Cardiac septum (tissue), 1 donor: ENCODE measurements at regions of chr2 and their contacts with region 1.

Region 1: DNA sequence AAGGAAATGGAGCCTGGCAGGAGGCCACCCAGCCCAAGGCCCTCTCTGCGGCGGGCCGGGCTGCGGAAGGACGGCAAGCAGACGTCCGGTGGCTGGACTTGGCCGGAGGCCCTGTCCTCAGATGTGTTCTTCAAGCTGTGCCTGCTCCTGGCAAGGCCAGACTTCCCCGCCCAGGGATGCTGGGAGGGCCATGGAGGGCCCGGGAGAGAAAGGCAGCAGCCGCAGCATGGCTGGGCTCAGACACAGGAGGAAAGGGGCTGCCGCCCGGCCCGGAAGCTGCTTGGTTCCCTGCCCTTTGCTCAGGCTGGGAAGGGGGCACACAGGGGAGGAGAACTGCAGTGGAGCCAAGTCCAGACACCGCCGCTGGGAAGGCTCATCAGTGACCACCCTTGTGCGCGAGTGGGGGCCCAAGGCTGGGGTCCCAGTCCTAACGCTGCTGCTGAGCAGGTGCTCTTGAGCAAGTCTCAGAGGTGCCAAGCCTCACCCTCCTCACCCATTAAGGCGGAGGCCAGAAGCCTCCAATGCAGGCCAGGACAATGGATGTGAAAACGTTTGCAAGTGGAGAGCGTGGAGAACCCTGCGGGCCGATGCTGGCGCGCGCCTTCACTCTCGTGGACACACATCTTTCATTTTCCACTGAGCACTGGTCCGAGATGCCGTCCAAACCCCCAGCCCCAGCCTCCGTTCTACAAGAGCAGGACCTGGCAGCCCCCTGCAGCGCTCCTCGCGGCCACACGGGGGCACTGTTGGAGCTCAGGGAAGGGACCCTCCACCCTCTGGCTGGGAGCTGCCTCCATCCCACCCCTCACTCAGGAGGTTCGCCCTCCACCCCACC is 7.9 kb downstream of the CROCC2 start:
- DNase-seq: peak; percentile 87

Region 2: DNA sequence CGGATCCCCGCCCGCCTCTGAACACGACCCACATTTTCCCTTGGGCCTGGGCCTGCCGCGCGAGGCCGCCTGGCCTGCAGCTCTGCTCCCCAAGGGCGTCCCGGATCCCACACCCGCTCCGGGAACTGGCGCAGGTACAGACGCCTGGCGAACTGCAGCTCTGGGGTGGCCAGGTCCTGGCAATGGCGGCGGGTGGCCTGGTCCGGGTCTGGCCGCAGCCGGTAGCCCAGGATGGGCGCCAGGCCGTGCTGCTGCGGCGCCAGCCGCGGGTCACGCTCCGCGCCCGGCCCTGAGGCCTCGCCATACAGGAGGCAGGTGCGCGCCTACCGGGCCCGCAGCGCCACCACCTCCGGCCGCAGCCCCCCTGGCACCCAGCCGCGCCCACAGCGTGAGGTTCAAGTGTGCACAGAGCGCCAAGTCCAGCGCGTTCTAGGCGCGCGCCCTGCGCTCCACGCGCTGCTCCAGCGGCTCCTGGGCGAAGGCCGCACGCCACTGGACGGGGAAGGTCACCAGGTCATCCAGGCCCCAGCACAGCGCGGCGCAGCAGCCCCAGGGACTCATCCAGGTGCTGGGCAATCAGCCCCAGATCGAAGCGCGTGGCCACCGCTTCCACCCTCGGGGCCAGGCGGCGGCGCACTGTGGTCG is 212.8 kb before region 1 on chr2:
- intact Hi-C with region 1: no loop called
- DNase-seq: peak; percentile 66

Region 3: GRCh38 chr2:240991373-240992263 is 77.6 kb after region 1 on chr2:
- intact Hi-C with region 1: loop called (anchors 2 kb)
- DNase-seq: peak; percentile 88